ENCODE measurements at regions of chr3 and their contacts with region 1.

Region 1: DNA sequence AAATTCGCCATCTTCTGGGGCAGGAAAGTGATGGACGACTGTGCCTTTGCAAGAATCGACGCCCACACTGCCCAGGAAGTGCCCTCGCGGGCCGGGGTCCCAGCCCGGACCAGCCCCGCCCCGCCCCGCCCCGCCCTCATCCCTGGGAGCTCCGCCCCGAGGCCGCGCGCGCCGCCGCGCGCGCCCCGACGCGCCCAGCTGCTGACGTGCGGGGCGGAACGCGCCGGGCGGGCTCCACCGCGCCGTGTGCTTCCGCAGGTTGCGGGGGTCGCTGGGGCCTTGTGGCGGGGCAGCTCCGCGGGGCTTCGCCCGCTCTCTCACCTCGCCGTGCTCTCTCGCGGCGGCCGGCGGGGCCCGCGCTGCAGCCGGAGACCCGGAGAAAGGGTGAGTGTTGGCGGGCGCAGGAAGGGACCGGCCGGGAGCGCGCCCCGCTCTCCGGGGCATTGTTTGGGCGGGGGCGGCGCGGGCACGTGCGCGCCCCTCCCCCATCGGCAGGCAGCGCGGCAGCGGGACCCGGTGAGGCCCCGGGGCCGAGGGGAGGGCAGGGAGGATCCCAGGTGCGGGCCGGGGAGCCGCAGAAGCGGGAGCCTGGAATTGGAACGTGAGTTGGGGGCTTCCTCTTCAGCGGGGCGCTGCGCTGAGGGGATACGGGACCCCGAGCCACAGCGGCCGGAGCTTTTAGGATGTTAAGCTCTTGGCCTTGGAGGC is at the start of gene YEATS2:
- DNase-seq: peak; percentile 60 to 81 (median 74)
- ATAC-seq: peak; percentile 95
- H3K4me3 ChIP-seq: peak within 1 kb of the TSS; percentile 89
- H3K4me3 Mint-ChIP-seq: peak within 1 kb of the TSS; percentile 84 to 99 (median 94)
- H3K27ac ChIP-seq: peak within 1 kb of the TSS; percentile 84
- H3K27ac Mint-ChIP-seq: peak within 1 kb of the TSS; percentile 74 to 97 (median 90)
- H3K4me1 ChIP-seq: peaks cover 9 to 18% of the 10 kb centered on the region in 2 donors
- H3K4me1 Mint-ChIP-seq: peaks cover 32 to 50% (median 40%) of the 10 kb centered on the region in 7 donors
- H3K27me3 ChIP-seq: no peaks in the 10 kb centered on the region
- H3K27me3 Mint-ChIP-seq: no peaks in the 10 kb centered on the region
- total RNA-seq, gene YEATS2: 20.6 to 61.4 (median 21.9) TPM

Region 2: GRCh38 chr3:183161552-183162336 is 536.0 kb before region 1 on chr3:
- CTCF ChIA-PET with region 1: no interaction called
- POLR2A ChIA-PET with region 1: no interaction called
- intact Hi-C with region 1: loop called in 1 of 2 experiments (anchors 1 kb)
- DNase-seq: peak in 4 of 9 donors; percentile 12 to 18 (median 14)
- ATAC-seq: no peak
- H3K4me3 ChIP-seq: peak overlapping the region; percentile 92
- H3K4me3 Mint-ChIP-seq: peak overlapping the region; percentile 80 to 97 (median 90)
- H3K27ac ChIP-seq: peak overlapping the region; percentile 61
- H3K27ac Mint-ChIP-seq: peak overlapping the region; percentile 46 to 90 (median 76)
- H3K4me1 ChIP-seq: peaks cover 5% of the 10 kb centered on the region in 2 donors
- H3K4me1 Mint-ChIP-seq: peaks cover 8 to 33% (median 9%) of the 10 kb centered on the region in 7 donors
- H3K27me3 ChIP-seq: no peaks in the 10 kb centered on the region
- H3K27me3 Mint-ChIP-seq: peaks cover 0 to 3% (median 0%) of the 10 kb centered on the region in 5 donors

Region 3: DNA sequence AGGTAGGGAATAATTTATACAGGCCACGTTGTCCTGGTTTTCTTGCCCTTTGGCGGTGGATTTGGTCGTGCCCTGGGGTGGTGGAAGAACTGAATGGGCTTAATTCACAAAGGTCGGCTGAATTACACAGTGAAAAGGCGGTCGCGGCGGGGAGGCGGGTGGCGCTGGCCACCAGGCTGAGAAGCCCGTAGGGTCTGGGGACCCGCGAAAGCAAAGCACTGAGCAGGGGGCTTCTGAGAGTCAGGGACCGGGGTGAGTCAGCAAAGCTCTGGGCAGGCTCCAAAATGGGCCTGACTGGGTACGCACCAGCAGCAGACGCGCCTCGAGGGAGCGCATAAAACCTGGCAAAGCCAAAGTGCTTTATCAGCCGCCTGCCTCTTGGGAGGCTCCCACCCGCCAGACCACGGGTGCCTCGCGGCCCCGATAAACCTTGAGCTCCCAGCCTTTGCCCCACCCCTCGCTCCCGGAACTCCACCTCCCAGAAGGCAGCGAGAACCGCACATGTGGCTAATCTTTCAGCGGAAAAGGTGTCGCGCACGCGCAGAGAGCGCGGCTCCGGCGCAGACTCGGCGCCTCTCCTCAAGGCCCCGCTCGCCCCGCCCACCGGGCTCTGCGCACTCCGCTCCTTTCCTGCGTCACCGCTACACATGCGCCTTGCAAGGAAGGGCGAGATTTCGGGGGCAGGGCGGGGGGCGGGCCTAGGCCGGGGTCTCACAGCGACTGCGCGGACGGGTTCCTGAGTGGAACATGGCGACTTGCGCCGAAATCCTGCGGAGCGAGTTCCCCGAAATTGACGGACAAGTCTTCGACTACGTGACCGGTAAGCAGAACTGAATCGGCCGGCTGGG is 487.9 kb after region 1 on chr3 and contains the start of gene ABCF3:
- CTCF ChIA-PET with region 1: no interaction called
- POLR2A ChIA-PET with region 1: no interaction called
- intact Hi-C with region 1: no loop called
- DNase-seq: peak; percentile 98 to 100 (median 99)
- ATAC-seq: peak; percentile 96
- H3K4me3 ChIP-seq: peak within 1 kb of the TSS; percentile 81
- H3K4me3 Mint-ChIP-seq: peak within 1 kb of the TSS; percentile 91 to 100 (median 98)
- H3K27ac ChIP-seq: peak within 1 kb of the TSS; percentile 89
- H3K27ac Mint-ChIP-seq: peak within 1 kb of the TSS; percentile 89 to 98 (median 97)
- H3K4me1 ChIP-seq: peaks cover 18 to 24% of the 10 kb centered on the region in 2 donors
- H3K4me1 Mint-ChIP-seq: peaks cover 31 to 52% (median 43%) of the 10 kb centered on the region in 7 donors
- H3K27me3 ChIP-seq: no peaks in the 10 kb centered on the region
- H3K27me3 Mint-ChIP-seq: no peaks in the 10 kb centered on the region
- total RNA-seq, gene ABCF3: 79.3 to 153 (median 117) TPM

Measured in naive thymus-derived CD4-positive, alpha-beta T cell (primary cell).